Activated T-helper 2 cell treated with anti-CD3 and anti-CD28 coated beads, Interferon-gamma antibody, Interleukin-2, Interleukin-4, amounts not matched to agents 10 μg/mL and 5 μg/mL and 100 μg/mL, durations not matched to agents 14 hours and 24 hours and 36 hours (primary cell): ENCODE measurements at regions of chr9 and their contacts with region 1.

Region 1: DNA sequence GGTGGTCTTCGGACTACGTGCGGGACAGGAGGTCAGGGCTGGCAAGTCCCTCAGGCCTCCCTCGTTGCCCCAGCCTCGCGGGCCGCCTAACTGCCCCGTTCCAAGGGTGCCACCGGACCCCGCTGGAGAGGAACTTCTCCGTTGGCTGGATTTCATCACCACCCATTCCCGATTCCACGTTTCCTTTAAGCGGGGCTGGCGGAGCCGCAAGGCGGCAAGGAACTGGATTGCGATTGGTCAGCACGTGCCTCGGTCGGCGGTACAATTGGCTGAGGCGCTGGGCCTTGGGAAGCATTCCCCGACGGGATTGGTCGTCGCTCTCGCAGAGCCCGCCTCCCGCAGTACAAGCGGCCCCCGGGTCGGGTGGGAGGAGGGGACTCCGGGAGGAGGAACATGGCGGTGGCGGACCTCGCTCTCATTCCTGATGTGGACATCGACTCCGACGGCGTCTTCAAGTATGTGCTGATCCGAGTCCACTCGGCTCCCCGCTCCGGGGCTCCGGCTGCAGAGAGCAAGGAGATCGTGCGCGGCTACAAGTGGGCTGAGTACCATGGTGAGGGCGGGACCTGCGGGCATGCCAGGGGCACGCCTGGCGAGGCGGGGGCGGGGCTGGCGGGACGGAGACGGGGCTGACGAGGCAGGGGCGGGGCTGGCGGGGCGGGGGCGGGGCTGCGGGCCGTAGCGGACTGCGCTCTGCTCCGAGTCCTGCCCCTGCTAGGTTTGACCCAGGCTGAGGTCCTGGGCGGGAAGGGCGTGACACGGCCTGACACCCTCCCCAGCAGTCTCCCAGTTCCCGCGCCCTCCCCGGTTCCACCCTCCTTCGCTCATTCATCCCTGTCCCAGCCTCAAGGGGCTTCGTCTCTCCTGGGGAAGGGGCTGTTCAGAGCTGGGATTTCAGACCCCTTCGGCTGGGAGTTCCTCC is at the start of gene PHPT1:
- DNase-seq: peak; percentile 97
- H3K4me3 Mint-ChIP-seq: peak within 1 kb of the TSS; percentile 96
- H3K27ac Mint-ChIP-seq: peak within 1 kb of the TSS; percentile 91
- H3K4me1 Mint-ChIP-seq: peaks cover 6% of the 10 kb centered on the region
- H3K27me3 Mint-ChIP-seq: peaks cover 9% of the 10 kb centered on the region
- total RNA-seq, gene PHPT1: 127 and 133 TPM in 2 replicates

Region 2: GRCh38 chr9:136734837-136735496 is 114.3 kb before region 1 on chr9:
- intact Hi-C with region 1: no loop called
- DNase-seq: no peak
- H3K4me3 Mint-ChIP-seq: no peak overlapping the region
- H3K27ac Mint-ChIP-seq: no peak overlapping the region
- H3K4me1 Mint-ChIP-seq: peaks cover 11% of the 10 kb centered on the region
- H3K27me3 Mint-ChIP-seq: no peaks in the 10 kb centered on the region

Region 3: DNA sequence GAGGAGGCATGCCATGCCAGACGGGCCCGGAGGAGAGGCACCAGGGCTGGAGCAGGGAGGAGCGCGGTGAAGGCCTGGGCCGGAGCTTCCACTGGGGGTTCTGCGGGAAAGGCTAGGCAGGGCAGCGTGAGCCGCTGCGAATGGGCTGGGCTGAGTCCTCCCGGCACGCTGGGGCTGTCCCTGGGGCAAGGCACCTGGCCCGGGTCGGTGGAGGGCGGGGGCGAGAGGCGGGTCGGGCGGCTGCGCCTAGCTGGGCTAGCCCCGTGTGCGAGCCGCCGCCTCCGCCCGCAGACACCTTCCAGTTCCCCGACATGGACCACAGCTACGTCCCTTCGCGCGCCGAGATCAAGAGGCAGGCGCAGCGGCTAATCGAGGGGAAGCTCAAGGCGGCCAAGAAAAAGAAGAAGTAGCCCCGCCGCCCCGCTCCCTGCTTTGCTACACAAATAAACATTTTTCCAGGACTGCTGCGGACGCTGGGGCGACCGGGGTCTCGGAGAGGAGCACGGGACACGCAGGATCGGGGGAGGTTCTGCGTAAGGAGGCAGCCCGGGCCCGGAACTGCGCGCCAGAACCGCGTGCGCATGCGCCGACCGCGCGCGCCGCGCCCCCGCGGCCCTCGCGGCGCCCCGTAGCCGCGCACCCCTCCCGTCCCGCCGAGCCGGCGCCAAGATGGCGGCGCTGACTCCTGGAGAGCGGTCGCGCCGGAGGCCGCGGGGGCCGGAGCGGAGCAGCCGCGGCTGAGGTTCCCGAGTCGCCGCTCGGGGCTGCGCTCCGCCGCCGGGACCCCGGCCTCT is 41.8 kb before region 1 on chr9 and contains the start of gene RABL6:
- intact Hi-C with region 1: loop called (anchors 5 kb)
- DNase-seq: peak; percentile 84
- H3K4me3 Mint-ChIP-seq: peak within 1 kb of the TSS; percentile 85
- H3K27ac Mint-ChIP-seq: peak within 1 kb of the TSS; percentile 77
- H3K4me1 Mint-ChIP-seq: peaks cover 25% of the 10 kb centered on the region
- H3K27me3 Mint-ChIP-seq: no peaks in the 10 kb centered on the region
- total RNA-seq, gene RABL6: 108 and 111 TPM in 2 replicates

Region 4: GRCh38 chr9:136835162-136835931 is 14.0 kb before region 1 on chr9:
- intact Hi-C with region 1: no loop called
- DNase-seq: no peak
- H3K4me3 Mint-ChIP-seq: no peak overlapping the region
- H3K27ac Mint-ChIP-seq: no peak overlapping the region
- H3K4me1 Mint-ChIP-seq: no peaks in the 10 kb centered on the region
- H3K27me3 Mint-ChIP-seq: no peaks in the 10 kb centered on the region

Region 5: GRCh38 chr9:136902259-136902821 is 53.0 kb after region 1 on chr9:
- intact Hi-C with region 1: loop called (anchors 1 kb)
- DNase-seq: peak; percentile 81
- H3K4me3 Mint-ChIP-seq: peak overlapping the region; percentile 70
- H3K27ac Mint-ChIP-seq: peak overlapping the region; percentile 95
- H3K4me1 Mint-ChIP-seq: peaks cover 47% of the 10 kb centered on the region
- H3K27me3 Mint-ChIP-seq: no peaks in the 10 kb centered on the region

Region 6: GRCh38 chr9:137046098-137046787 is 196.9 kb after region 1 on chr9 and contains the start of gene NPDC1:
- intact Hi-C with region 1: loop called (anchors 5 kb)
- DNase-seq: peak; percentile 76
- H3K4me3 Mint-ChIP-seq: peak within 1 kb of the TSS; percentile 60
- H3K27ac Mint-ChIP-seq: no peak within 1 kb of the TSS
- H3K4me1 Mint-ChIP-seq: peaks cover 4% of the 10 kb centered on the region
- H3K27me3 Mint-ChIP-seq: peaks cover 29% of the 10 kb centered on the region
- total RNA-seq, gene NPDC1: 32.7 and 36.0 TPM in 2 replicates